ENCODE measurements at regions of chr18 and their contacts with region 1.

Region 1: GRCh38 chr18:58761970-58762780 is 90.9 kb downstream of the MALT1 start:
- H3K4me3 ChIP-seq: no peak overlapping the region
- H3K27ac ChIP-seq: no peak overlapping the region
- H3K4me1 ChIP-seq: peaks cover 4% of the 10 kb centered on the region; the same call in 1 of the 2 replicates
- CTCF ChIP-seq: no peak

Region 2: DNA sequence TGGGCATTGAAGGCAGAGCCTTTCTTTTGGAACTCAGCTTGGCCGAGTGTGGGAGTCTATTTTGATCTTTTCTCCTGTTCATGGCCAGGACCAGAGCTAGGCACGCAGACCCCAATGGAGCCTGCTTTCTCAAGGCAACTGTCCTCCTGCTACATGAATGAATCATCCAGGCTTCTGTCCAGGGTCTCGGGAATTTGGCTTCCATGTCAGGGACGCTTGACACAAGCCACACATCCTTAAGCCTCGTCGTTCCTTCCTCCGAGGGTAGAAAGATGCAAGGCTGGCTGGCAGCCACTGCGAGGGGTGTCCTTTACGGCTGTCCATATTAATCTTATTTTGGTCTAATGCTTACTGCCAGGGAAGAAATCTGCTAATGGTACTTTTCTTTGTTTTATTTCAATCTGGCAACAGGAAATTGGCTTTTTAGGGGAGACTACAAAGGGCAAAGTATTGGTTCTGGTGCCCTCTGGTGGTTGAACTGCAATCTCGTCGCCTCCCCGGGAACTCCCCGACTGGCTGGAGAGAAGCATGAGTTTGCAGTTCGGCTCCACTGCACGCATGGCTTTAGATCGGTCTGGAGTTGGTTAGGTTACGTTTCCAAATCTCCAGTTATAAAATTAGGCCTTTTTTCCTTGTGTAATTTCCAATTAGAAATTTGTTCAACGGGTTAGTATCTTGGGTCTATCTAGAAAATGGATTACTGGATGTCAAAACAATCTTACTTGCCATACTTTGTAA is 268.5 kb before region 1 on chr18:
- CTCF ChIA-PET with region 1: interaction called, 18 read pairs
- POLR2A ChIA-PET with region 1: no interaction called
- H3K4me3 ChIP-seq: no peak overlapping the region
- H3K27ac ChIP-seq: no peak overlapping the region
- H3K4me1 ChIP-seq: no peaks in the 10 kb centered on the region
- CTCF ChIP-seq: peak; percentile 62; the same call in 1 of the 2 replicates

Region 3: DNA sequence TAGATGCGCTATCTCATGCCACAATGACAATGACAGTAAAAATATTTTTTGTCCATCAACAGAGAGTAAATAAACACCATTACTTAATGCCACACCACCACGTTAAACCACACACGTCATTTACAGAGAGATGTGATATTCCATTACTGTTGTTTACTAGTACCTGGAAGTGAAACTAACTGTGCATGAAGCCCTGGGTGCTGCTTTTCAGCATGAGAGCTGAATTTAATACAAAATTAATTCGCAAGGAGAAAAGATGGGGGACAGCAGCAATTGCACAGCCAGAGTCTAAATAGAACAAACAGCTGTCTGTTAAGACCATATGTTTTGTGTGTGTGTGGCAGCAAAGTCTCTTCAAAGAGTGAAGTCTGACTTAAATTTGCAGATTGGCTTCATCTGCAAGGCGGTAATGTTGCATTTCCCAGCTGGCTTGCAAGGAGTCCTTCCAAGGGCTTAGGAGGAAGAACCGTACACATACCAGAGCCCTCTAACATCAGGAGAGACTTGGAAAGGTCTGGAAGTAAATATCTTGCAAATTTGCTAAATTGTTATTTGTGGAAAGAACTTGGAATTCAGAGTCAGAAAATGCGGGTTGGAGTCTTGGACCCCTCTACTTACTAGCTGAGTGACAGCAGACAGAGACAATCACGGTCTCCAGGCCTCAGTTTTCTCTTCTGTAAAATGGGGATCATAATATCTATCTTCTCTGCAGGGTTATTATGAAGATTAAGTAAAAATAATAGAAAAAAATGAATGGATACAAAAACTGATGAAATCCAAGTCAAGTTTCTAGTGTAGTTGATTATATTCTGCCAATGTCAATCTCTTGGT is 260.9 kb before region 1 on chr18:
- CTCF ChIA-PET with region 1: interaction called, 24 read pairs
- POLR2A ChIA-PET with region 1: no interaction called
- H3K4me3 ChIP-seq: no peak overlapping the region
- H3K27ac ChIP-seq: no peak overlapping the region
- H3K4me1 ChIP-seq: no peaks in the 10 kb centered on the region
- CTCF ChIP-seq: no peak

Measured in HEK293 (cell line).